GM12878 (cell line): ENCODE measurements at regions of chr3 and their contacts with region 1.

Region 1: DNA sequence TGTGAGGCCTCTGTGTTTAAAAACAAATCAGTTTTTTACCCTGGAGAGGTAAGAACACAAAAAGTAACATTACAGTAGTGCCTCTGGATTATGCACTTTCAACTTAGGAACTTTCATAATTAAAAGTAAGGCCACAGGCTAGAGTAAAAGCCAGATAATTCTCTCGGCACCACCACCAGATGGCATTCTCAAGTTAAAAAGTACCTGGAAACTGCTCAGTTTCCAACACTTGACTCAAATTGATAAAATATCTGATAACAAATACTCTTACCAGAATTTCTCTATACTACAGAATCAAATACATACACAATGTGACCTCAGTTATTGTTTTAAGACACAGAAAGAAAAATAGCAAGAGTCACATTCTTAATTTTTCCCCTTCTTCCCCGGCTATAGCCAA is 19.9 kb downstream of the SPICE1 start:
- DNase-seq: no peak
- ATAC-seq: peak; percentile 96
- H3K4me3 ChIP-seq: no peak overlapping the region
- H3K27ac ChIP-seq: no peak overlapping the region
- H3K4me1 ChIP-seq: no peaks in the 10 kb centered on the region; the same call in 1 of the 2 replicates
- H3K27me3 ChIP-seq: no peaks in the 10 kb centered on the region
- CTCF ChIP-seq: peak; percentile 45 to 67 (median 50); a peak in 4 of 6 replicates
- EP300 ChIP-seq: no peak
- POLR2A ChIP-seq: no peak
- RAD21 ChIP-seq: peak; percentile 71

Region 2: DNA sequence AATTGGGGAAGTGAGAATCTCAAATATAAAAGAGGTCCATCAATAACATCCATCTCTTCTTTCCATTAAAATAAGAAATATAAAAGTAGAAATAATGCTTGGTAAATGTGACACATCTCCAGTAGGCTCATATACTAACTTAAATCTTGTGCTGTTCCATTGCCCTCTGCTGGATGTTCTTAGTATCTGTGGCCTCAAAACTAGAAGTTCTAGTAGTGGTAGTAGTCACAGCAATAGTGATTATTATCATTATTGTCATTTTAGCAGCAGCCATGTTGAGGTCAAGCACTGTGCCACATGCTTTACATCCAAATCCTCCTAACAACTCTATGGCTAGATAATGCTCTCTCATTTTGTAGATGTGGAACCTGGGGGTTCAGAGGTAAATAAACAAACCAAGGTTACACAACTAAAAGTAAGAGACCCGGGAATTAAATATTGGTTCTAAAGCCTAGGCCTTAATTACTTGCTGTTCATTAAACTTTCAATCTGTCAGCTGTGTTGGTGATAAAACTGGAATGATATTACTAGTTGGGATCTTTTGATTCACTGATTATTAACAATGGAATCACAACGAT is 975.5 kb before region 1 on chr3:
- CTCF ChIA-PET with region 1: no interaction called
- POLR2A ChIA-PET with region 1: no interaction called
- RAD21 ChIA-PET with region 1: no interaction called
- SMC1A ChIA-PET with region 1: no interaction called
- in situ Hi-C with region 1: no loop called
- intact Hi-C with region 1: no loop called
- DNase-seq: peak; percentile 68
- ATAC-seq: peak; percentile 83
- H3K4me3 ChIP-seq: no peak overlapping the region
- H3K27ac ChIP-seq: peak overlapping the region; percentile 54
- H3K4me1 ChIP-seq: peaks cover 4% of the 10 kb centered on the region; the same call in 1 of the 2 replicates
- H3K27me3 ChIP-seq: no peaks in the 10 kb centered on the region
- CTCF ChIP-seq: peak; percentile 68 to 72 (median 70)
- EP300 ChIP-seq: no peak
- POLR2A ChIP-seq: no peak
- RAD21 ChIP-seq: peak; percentile 92

Region 3: GRCh38 chr3:113136071-113136470 is 359.0 kb before region 1 on chr3:
- CTCF ChIA-PET with region 1: no interaction called
- POLR2A ChIA-PET with region 1: no interaction called
- RAD21 ChIA-PET with region 1: no interaction called
- SMC1A ChIA-PET with region 1: no interaction called
- in situ Hi-C with region 1: no loop called
- intact Hi-C with region 1: no loop called
- DNase-seq: no peak
- ATAC-seq: 0 out of 3 replicates have a peak, but pooled peaks have one; percentile 31
- H3K4me3 ChIP-seq: no peak overlapping the region
- H3K27ac ChIP-seq: no peak overlapping the region
- H3K4me1 ChIP-seq: no peaks in the 10 kb centered on the region
- H3K27me3 ChIP-seq: no peaks in the 10 kb centered on the region
- CTCF ChIP-seq: peak; percentile 40 to 42 (median 42); a peak in 4 of 6 replicates
- EP300 ChIP-seq: no peak
- POLR2A ChIP-seq: no peak
- RAD21 ChIP-seq: peak; percentile 40; the same call in 1 of the 2 replicates

Region 4: GRCh38 chr3:113304856-113305540 is 190.0 kb before region 1 on chr3:
- CTCF ChIA-PET with region 1: no interaction called
- POLR2A ChIA-PET with region 1: no interaction called
- RAD21 ChIA-PET with region 1: no interaction called
- SMC1A ChIA-PET with region 1: no interaction called
- in situ Hi-C with region 1: no loop called
- intact Hi-C with region 1: no loop called
- DNase-seq: no peak
- ATAC-seq: no peak
- H3K4me3 ChIP-seq: no peak overlapping the region
- H3K27ac ChIP-seq: no peak overlapping the region
- H3K4me1 ChIP-seq: no peaks in the 10 kb centered on the region
- H3K27me3 ChIP-seq: no peaks in the 10 kb centered on the region
- CTCF ChIP-seq: no peak
- EP300 ChIP-seq: no peak
- POLR2A ChIP-seq: no peak
- RAD21 ChIP-seq: no peak

Region 5: GRCh38 chr3:113507501-113508067 is 12.5 kb after region 1 on chr3:
- CTCF ChIA-PET with region 1: interaction called, 69 read pairs
- POLR2A ChIA-PET with region 1: interaction called, 4 read pairs
- RAD21 ChIA-PET with region 1: interaction called, 27 read pairs
- SMC1A ChIA-PET with region 1: interaction called, 39 read pairs
- in situ Hi-C with region 1: no loop called
- intact Hi-C with region 1: no loop called
- DNase-seq: no peak
- ATAC-seq: peak; percentile 23; the same call in 2 of the 3 replicates
- H3K4me3 ChIP-seq: no peak overlapping the region
- H3K27ac ChIP-seq: no peak overlapping the region
- H3K4me1 ChIP-seq: no peaks in the 10 kb centered on the region
- H3K27me3 ChIP-seq: no peaks in the 10 kb centered on the region
- CTCF ChIP-seq: no peak
- EP300 ChIP-seq: no peak
- POLR2A ChIP-seq: no peak
- RAD21 ChIP-seq: no peak

Region 6: GRCh38 chr3:113531826-113532697 is 37.0 kb after region 1 on chr3 and contains the start of gene SIDT1:
- CTCF ChIA-PET with region 1: interaction called, 9 read pairs
- POLR2A ChIA-PET with region 1: interaction called, 3 read pairs
- RAD21 ChIA-PET with region 1: interaction called, 8 read pairs
- SMC1A ChIA-PET with region 1: interaction called, 14 read pairs
- in situ Hi-C with region 1: no loop called
- intact Hi-C with region 1: loop called (anchors 2 kb)
- DNase-seq: peak; percentile 71
- ATAC-seq: peak; percentile 71
- H3K4me3 ChIP-seq: peak within 1 kb of the TSS; percentile 97
- H3K27ac ChIP-seq: peak within 1 kb of the TSS; percentile 98
- H3K4me1 ChIP-seq: peaks cover 6% of the 10 kb centered on the region
- H3K27me3 ChIP-seq: no peaks in the 10 kb centered on the region
- CTCF ChIP-seq: peak in 1 of 3 experiments; percentile 25; a peak in 2 of 6 replicates
- EP300 ChIP-seq: 0 out of 4 replicates have a peak, but pooled peaks of 1 of the 2 experiments have one; percentile 26
- POLR2A ChIP-seq: peak; percentile 74
- RAD21 ChIP-seq: no peak
- polyA plus RNA-seq, gene SIDT1: 3.0 to 3.2 TPM

Region 7: DNA sequence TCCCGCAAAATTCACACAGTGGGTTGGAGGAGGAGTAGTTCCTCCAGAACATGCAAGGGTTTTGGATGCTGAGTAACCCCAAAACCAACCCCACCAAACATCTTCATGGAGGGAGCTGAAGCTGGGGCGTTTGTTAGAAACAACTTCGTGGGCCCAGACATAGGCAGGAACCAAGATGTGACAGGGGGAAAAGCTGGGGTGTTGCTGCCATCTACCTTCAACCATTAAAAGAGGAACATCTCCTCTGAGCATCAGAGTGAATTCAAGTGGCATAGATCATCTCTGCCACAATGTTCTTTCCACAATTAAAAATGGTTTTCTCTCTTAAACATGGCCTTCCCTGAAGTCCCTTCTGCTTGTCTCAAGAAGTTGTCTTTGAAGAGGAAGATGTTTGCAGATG is 57.8 kb after region 1 on chr3:
- CTCF ChIA-PET with region 1: interaction called, 102 read pairs
- POLR2A ChIA-PET with region 1: interaction called, 6 read pairs
- RAD21 ChIA-PET with region 1: interaction called, 20 read pairs
- SMC1A ChIA-PET with region 1: interaction called, 85 read pairs
- in situ Hi-C with region 1: no loop called
- intact Hi-C with region 1: loop called (anchors 1 kb)
- DNase-seq: no peak
- ATAC-seq: peak; percentile 85
- H3K4me3 ChIP-seq: no peak overlapping the region
- H3K27ac ChIP-seq: no peak overlapping the region; the same call in 1 of the 2 replicates
- H3K4me1 ChIP-seq: peaks cover 4% of the 10 kb centered on the region
- H3K27me3 ChIP-seq: no peaks in the 10 kb centered on the region
- CTCF ChIP-seq: peak in 2 of 3 experiments; percentile 24 to 67; a peak in 3 of 6 replicates
- EP300 ChIP-seq: no peak
- POLR2A ChIP-seq: no peak
- RAD21 ChIP-seq: peak; percentile 80

Region 8: DNA sequence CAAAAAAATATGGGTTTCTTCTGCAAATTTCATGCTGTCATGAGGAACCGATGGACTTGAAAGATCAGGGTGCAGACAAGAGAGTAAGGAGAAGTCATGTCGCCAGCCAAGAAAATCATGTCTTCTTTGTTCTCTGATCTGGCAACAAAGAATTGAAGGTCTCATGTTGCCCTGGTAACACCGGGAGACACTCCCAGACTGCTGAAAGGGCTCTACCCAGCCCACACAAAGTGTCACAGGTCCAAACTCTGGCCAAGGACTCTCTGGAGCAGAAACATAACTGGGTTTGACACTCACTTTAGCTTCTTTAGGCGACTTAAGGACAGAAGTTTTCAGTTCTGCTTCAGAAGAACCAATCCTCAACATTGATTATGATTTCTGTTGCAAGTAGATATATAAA is 80.2 kb after region 1 on chr3:
- CTCF ChIA-PET with region 1: interaction called, 162 read pairs
- POLR2A ChIA-PET with region 1: interaction called, 6 read pairs
- RAD21 ChIA-PET with region 1: interaction called, 77 read pairs
- SMC1A ChIA-PET with region 1: interaction called, 95 read pairs
- in situ Hi-C with region 1: loop called (anchors 5 kb)
- intact Hi-C with region 1: loop called (anchors 1 kb)
- DNase-seq: no peak
- ATAC-seq: no peak
- H3K4me3 ChIP-seq: no peak overlapping the region
- H3K27ac ChIP-seq: no peak overlapping the region
- H3K4me1 ChIP-seq: no peaks in the 10 kb centered on the region
- H3K27me3 ChIP-seq: no peaks in the 10 kb centered on the region
- CTCF ChIP-seq: no peak
- EP300 ChIP-seq: no peak
- POLR2A ChIP-seq: no peak
- RAD21 ChIP-seq: no peak

Region 9: DNA sequence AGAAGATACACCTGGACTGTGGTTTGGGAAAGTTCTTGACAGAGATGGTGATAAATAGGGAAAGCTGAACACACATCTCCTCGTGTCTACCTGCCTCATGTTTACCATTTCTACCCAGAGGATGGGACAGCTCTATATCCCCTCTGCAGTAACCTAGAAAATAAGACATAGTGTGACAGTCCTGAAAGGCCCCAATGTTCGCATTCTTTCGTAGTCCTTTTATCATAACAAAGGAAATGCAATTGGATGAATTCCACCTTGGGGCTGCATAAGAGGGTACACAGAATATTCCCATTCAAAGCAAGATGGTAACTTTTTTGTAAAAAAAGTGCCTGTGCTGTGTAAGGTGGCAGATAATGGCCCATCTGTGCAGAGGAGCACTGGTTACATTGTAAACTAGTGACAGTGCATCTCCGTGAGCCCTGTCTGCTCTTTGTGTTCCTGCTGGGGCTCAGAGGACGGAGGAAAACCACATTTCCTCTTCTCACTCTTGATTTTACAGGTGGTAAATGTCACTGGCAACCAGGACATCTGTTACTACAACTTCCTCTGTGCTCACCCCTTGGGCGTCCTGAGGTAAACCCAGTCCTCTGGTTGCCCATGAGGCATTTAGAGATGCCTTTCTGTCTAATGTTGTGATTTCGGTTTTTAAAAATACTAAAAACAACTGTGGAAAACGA is 111.6 kb after region 1 on chr3:
- CTCF ChIA-PET with region 1: interaction called, 21 read pairs
- POLR2A ChIA-PET with region 1: no interaction called
- RAD21 ChIA-PET with region 1: interaction called, 6 read pairs
- SMC1A ChIA-PET with region 1: interaction called, 6 read pairs
- in situ Hi-C with region 1: no loop called
- intact Hi-C with region 1: no loop called
- DNase-seq: peak; percentile 75
- ATAC-seq: peak; percentile 99
- H3K4me3 ChIP-seq: no peak overlapping the region
- H3K27ac ChIP-seq: peak overlapping the region; percentile 52; the same call in 1 of the 2 replicates
- H3K4me1 ChIP-seq: peaks cover 17% of the 10 kb centered on the region
- H3K27me3 ChIP-seq: no peaks in the 10 kb centered on the region
- CTCF ChIP-seq: no peak
- EP300 ChIP-seq: peak in 1 of 2 experiments; percentile 56; a peak in 1 of 4 replicates
- POLR2A ChIP-seq: no peak
- RAD21 ChIP-seq: no peak

Region 10: GRCh38 chr3:113736548-113737089 is 241.6 kb after region 1 on chr3:
- CTCF ChIA-PET with region 1: interaction called, 14 read pairs
- POLR2A ChIA-PET with region 1: interaction called, 3 read pairs
- RAD21 ChIA-PET with region 1: interaction called, 10 read pairs
- SMC1A ChIA-PET with region 1: interaction called, 8 read pairs
- in situ Hi-C with region 1: loop called (anchors 10 kb)
- intact Hi-C with region 1: no loop called
- DNase-seq: peak; percentile 44
- ATAC-seq: peak; percentile 77
- H3K4me3 ChIP-seq: no peak overlapping the region
- H3K27ac ChIP-seq: peak overlapping the region; percentile 40; the same call in 1 of the 2 replicates
- H3K4me1 ChIP-seq: peaks cover 6% of the 10 kb centered on the region; the same call in 1 of the 2 replicates
- H3K27me3 ChIP-seq: no peaks in the 10 kb centered on the region
- CTCF ChIP-seq: peak; percentile 46 to 81 (median 69); a peak in 5 of 6 replicates
- EP300 ChIP-seq: no peak
- POLR2A ChIP-seq: no peak
- RAD21 ChIP-seq: peak; percentile 95